CD14-positive monocyte (primary cell): ENCODE measurements at regions of chr1 and their contacts with region 1.

Region 1: GRCh38 chr1:110630839-110631663 is 24.9 kb upstream of the KCNA2 start:
- DNase-seq: peak; percentile 70 to 85 (median 73)
- H3K4me3 ChIP-seq: no peak overlapping the region
- H3K4me3 Mint-ChIP-seq: no peak overlapping the region
- H3K27ac ChIP-seq: no peak overlapping the region
- H3K27ac Mint-ChIP-seq: no peak overlapping the region
- H3K4me1 ChIP-seq: peaks cover 62 to 65% of the 10 kb centered on the region in 2 donors
- H3K4me1 Mint-ChIP-seq: peaks cover 58% of the 10 kb centered on the region
- H3K27me3 ChIP-seq: no peaks in the 10 kb centered on the region
- H3K27me3 Mint-ChIP-seq: peaks cover 0 to 4% (median 0%) of the 10 kb centered on the region in 3 donors
- CTCF ChIP-seq: peak; percentile 83

Region 2: GRCh38 chr1:110674337-110675059 is 43.4 kb after region 1 on chr1 and contains the start of gene KCNA3:
- intact Hi-C with region 1: loop called (anchors 5 kb)
- DNase-seq: peak; percentile 17 to 39 (median 36)
- H3K4me3 ChIP-seq: peak within 1 kb of the TSS; percentile 70 to 89 (median 78)
- H3K4me3 Mint-ChIP-seq: peak within 1 kb of the TSS; percentile 95 to 99
- H3K27ac ChIP-seq: peak within 1 kb of the TSS; percentile 10 to 83
- H3K27ac Mint-ChIP-seq: peak within 1 kb of the TSS in 6 of 7 donors; percentile 84 to 93 (median 90)
- H3K4me1 ChIP-seq: peaks cover 38 to 73% of the 10 kb centered on the region in 2 donors
- H3K4me1 Mint-ChIP-seq: peaks cover 60% of the 10 kb centered on the region
- H3K27me3 ChIP-seq: no peaks in the 10 kb centered on the region
- H3K27me3 Mint-ChIP-seq: peaks cover 2 to 16% (median 10%) of the 10 kb centered on the region in 3 donors
- CTCF ChIP-seq: peak; percentile 20
- polyA plus RNA-seq, gene KCNA3: 4.8 to 7.7 (median 5.6) TPM

Region 3: DNA sequence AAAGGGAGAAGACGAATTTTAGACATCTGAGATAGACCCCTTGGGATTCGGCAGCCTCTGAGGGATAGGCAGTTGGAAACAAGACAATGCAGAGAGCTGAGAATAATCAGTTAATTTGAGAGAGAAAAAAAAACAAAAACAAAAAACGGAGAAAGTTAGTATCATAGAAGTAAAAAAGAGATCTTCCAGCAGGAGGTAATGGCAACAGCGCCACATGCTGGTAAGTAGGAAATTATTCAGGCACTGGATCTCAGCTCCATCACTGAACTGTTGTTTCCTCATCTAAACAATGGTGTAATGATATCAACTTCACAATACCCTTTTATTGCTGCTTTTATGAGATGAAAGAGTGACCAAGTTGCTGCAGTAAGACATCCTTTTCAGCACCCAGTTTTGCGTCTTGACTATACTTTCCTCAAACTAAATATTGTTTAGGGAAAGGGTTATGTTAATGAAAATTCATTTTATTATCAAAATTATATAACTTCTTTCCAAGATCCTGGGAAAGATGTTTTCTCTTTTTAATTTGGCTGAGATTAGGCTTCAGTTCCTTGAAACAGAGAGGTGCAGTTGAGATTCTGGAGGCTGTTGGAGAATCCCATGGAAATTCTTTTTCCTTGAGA is 135.1 kb after region 1 on chr1:
- intact Hi-C with region 1: loop called in 1 of 2 experiments (anchors 5 kb)
- DNase-seq: peak; percentile 57 to 73 (median 70)
- H3K4me3 ChIP-seq: no peak overlapping the region
- H3K4me3 Mint-ChIP-seq: peak overlapping the region in 1 of 2 donors; percentile 51
- H3K27ac ChIP-seq: no peak overlapping the region
- H3K27ac Mint-ChIP-seq: peak overlapping the region in 3 of 7 donors; percentile 59 to 69 (median 65)
- H3K4me1 ChIP-seq: peaks cover 6 to 10% of the 10 kb centered on the region in 2 donors
- H3K4me1 Mint-ChIP-seq: peaks cover 14% of the 10 kb centered on the region
- H3K27me3 ChIP-seq: peaks cover 0 to 2% of the 10 kb centered on the region in 2 donors
- H3K27me3 Mint-ChIP-seq: peaks cover 6 to 7% (median 7%) of the 10 kb centered on the region in 3 donors
- CTCF ChIP-seq: peak; percentile 85

Region 4: DNA sequence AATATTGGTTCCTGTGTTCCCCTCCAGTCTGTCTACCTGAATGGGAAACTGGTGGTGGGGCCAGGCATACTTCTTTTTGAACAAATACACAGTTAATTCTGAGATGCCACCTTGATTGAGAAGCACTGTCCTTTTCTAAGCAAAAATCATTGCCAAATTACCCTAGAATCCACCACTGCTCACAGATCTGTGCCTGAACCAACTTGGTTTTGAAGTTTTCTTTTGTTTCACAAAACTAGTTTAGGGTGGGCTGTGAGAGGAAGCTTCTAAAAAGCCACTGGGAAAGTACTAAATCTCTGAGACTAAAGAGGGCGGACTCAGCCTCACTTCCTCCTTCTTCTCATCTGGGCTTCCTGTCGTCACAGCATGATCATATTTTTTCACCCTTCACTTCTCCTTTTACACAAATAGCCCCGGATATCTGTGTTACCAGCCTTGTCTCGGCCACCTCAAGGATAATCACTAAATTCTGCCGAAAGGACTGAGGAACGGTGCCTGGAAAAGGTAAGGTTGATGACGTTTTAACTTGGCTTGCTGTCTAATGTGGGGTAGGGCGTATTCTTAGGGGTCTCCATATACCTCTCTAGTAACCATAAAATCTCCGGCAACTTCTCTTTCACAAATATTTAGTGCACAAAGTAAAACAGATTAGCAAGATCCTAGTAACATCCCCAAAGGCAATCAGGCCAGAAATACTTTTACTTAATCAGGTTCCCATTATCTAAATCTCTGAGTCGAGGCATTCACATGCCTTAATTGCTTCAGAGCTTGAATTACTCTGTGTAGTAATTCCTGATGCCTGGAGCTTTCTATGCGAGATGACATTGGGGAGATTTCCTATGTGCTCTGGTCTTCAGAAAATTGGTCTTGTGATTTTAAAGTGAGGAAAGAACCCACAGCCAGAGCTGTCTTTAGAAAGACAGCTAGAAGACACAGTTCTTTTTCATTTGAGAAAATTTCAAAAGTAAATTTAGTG is 242.0 kb after region 1 on chr1 and contains the start of gene CD53:
- intact Hi-C with region 1: loop called in 1 of 2 experiments (anchors 10 kb)
- DNase-seq: peak; percentile 91 to 96 (median 95)
- H3K4me3 ChIP-seq: peak within 1 kb of the TSS; percentile 80 to 100 (median 98)
- H3K4me3 Mint-ChIP-seq: peak within 1 kb of the TSS; percentile 94 to 99
- H3K27ac ChIP-seq: peak within 1 kb of the TSS; percentile 90 to 99
- H3K27ac Mint-ChIP-seq: peak within 1 kb of the TSS; percentile 99 to 100 (median 100)
- H3K4me1 ChIP-seq: peaks cover 40 to 54% of the 10 kb centered on the region in 2 donors
- H3K4me1 Mint-ChIP-seq: peaks cover 54% of the 10 kb centered on the region
- H3K27me3 ChIP-seq: no peaks in the 10 kb centered on the region
- H3K27me3 Mint-ChIP-seq: peaks cover 0 to 2% (median 0%) of the 10 kb centered on the region in 3 donors
- CTCF ChIP-seq: no peak
- polyA plus RNA-seq, gene CD53: 826 to 1,222 (median 1,107) TPM